Mammary epithelial cell (primary cell): ENCODE measurements at regions of chr10 and their contacts with region 1.

Region 1: GRCh38 chr10:91551856-91552255 is 81.0 kb downstream of the PPP1R3C start:
- DNase-seq: peak; percentile 25
- H3K4me3 ChIP-seq: no peak overlapping the region
- H3K27ac ChIP-seq: no peak overlapping the region
- H3K4me1 ChIP-seq: peaks cover 17% of the 10 kb centered on the region
- H3K27me3 ChIP-seq: no peaks in the 10 kb centered on the region
- CTCF ChIP-seq: peak; percentile 37 to 58

Region 2: GRCh38 chr10:91389636-91390512 is 162.0 kb before region 1 on chr10:
- CTCF ChIA-PET with region 1: no interaction called
- dilution Hi-C with region 1: no loop called
- in situ Hi-C with region 1: no loop called
- intact Hi-C with region 1: loop called (anchors 1 kb)
- DNase-seq: peak; percentile 36
- H3K4me3 ChIP-seq: no peak overlapping the region
- H3K27ac ChIP-seq: no peak overlapping the region
- H3K4me1 ChIP-seq: no peaks in the 10 kb centered on the region
- H3K27me3 ChIP-seq: peaks cover 2% of the 10 kb centered on the region
- CTCF ChIP-seq: peak; percentile 54 to 55

Region 3: DNA sequence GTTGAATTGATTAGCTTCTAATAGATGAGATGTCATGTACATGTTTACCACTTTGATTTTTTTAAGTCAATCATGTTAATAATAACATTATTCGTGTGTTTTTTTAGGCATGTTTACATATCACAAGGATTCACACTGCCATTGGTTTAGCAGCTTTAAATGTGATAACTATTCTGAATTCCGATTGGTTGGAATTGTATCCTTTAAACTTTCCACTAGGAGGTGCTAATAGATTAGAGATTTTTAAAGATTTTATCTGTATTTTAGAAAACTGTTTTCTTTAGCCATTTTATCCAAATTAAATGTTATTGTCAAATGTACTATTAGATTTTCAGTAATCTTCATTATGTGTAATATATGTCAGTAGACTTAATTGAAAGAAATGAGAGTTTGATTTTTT is 58.5 kb before region 1 on chr10:
- CTCF ChIA-PET with region 1: interaction called, 9 read pairs
- dilution Hi-C with region 1: no loop called
- in situ Hi-C with region 1: no loop called
- intact Hi-C with region 1: loop called (anchors 5 kb)
- DNase-seq: peak; percentile 21
- H3K4me3 ChIP-seq: no peak overlapping the region
- H3K27ac ChIP-seq: no peak overlapping the region
- H3K4me1 ChIP-seq: no peaks in the 10 kb centered on the region
- H3K27me3 ChIP-seq: no peaks in the 10 kb centered on the region
- CTCF ChIP-seq: peak; percentile 31 to 45

Region 4: GRCh38 chr10:91632671-91633550 is 81.1 kb after region 1 on chr10 and contains the start of gene PPP1R3C:
- CTCF ChIA-PET with region 1: no interaction called
- dilution Hi-C with region 1: no loop called
- in situ Hi-C with region 1: no loop called
- intact Hi-C with region 1: loop called (anchors 1 kb)
- DNase-seq: peak; percentile 84
- H3K4me3 ChIP-seq: peak within 1 kb of the TSS; percentile 53 to 71 (median 55)
- H3K27ac ChIP-seq: peak within 1 kb of the TSS; percentile 15
- H3K4me1 ChIP-seq: peaks cover 19% of the 10 kb centered on the region
- H3K27me3 ChIP-seq: no peaks in the 10 kb centered on the region
- CTCF ChIP-seq: peak in 1 of 2 donors; percentile 36
- total RNA-seq, gene PPP1R3C: 0.49 to 11.3 TPM

Region 5: DNA sequence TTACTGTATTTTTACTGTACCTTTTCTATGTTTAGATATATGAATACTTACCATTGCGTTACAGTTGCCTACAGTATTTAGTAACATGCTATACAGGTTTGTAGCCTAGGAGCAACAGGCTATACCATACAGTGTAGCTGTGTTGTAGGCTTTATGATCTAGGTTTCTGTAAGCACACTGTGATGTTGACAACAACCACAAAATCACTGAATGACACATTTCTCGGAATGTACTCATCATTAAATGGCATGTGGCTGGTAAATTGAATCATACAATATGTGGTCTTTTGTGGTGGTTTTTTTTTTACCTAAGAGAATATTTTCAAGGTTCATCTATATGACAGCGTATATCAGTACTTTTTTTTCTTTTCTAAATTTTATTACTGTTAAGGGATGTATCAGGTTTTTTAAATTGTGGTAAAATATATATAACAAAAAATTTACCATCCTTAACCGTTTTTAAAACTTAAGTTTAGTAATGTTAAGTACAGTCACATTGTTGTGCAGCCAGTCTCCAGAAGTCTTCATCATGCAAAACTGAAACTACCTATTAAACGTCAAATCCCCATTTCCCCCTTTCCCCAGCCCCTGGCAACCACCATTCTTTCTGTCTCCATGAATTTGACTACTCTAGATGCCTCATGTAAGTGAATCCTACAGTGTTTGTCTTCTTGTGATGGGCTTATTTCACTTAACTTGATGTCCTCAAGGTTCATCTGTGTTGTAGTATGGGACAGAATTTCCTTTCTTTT is 393.2 kb after region 1 on chr10:
- CTCF ChIA-PET with region 1: no interaction called
- dilution Hi-C with region 1: no loop called
- in situ Hi-C with region 1: no loop called
- intact Hi-C with region 1: no loop called
- DNase-seq: peak; percentile 81
- H3K4me3 ChIP-seq: no peak overlapping the region
- H3K27ac ChIP-seq: peak overlapping the region; percentile 28
- H3K4me1 ChIP-seq: peaks cover 8% of the 10 kb centered on the region
- H3K27me3 ChIP-seq: no peaks in the 10 kb centered on the region
- CTCF ChIP-seq: no peak